MCF 10A (cell line): ENCODE measurements at regions of chr12 and their contacts with region 1.

Region 1: GRCh38 chr12:64801381-64801780 is 23.1 kb upstream of the TBC1D30 start:
- DNase-seq: peak; percentile 45
- H3K4me3 Mint-ChIP-seq: no peak overlapping the region
- H3K27ac Mint-ChIP-seq: no peak overlapping the region
- H3K4me1 Mint-ChIP-seq: peaks cover 13% of the 10 kb centered on the region
- H3K27me3 Mint-ChIP-seq: no peaks in the 10 kb centered on the region
- CTCF ChIP-seq: no peak

Region 2: GRCh38 chr12:64431791-64432190 is 369.6 kb before region 1 on chr12:
- CTCF ChIA-PET with region 1: no interaction called
- POLR2A ChIA-PET with region 1: no interaction called
- intact Hi-C with region 1: no loop called
- DNase-seq: no peak
- H3K4me3 Mint-ChIP-seq: no peak overlapping the region
- H3K27ac Mint-ChIP-seq: no peak overlapping the region
- H3K4me1 Mint-ChIP-seq: no peaks in the 10 kb centered on the region
- H3K27me3 Mint-ChIP-seq: no peaks in the 10 kb centered on the region
- CTCF ChIP-seq: no peak

Region 3: GRCh38 chr12:64780531-64781279 is 20.7 kb before region 1 on chr12:
- CTCF ChIA-PET with region 1: interaction called, 27 read pairs
- POLR2A ChIA-PET with region 1: interaction called, 4 read pairs
- intact Hi-C with region 1: no loop called
- DNase-seq: peak; percentile 57
- H3K4me3 Mint-ChIP-seq: peak overlapping the region; percentile 80
- H3K27ac Mint-ChIP-seq: peak overlapping the region; percentile 23
- H3K4me1 Mint-ChIP-seq: peaks cover 7% of the 10 kb centered on the region
- H3K27me3 Mint-ChIP-seq: peaks cover 17% of the 10 kb centered on the region
- CTCF ChIP-seq: no peak

Region 4: DNA sequence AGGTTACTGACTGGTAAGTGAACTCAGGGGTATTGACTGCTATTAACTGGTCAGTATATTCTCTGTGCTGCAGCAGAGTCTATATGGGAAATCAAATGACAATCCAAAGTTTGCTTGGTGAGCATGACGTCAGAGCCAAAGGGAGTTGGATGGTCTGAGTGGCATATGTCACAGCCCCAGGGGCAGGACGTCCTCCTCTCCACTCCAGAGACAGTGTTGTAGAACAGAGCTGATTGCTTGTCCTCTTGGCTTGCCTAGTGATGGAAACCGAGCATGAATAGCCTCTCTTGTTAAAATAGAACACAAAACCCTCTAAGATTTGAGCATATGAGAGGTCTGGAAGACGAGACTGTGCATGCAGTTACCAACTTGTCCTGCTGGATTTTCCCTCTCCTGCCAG is 19.8 kb after region 1 on chr12:
- CTCF ChIA-PET with region 1: interaction called, 37 read pairs
- POLR2A ChIA-PET with region 1: no interaction called
- intact Hi-C with region 1: no loop called
- DNase-seq: no peak
- H3K4me3 Mint-ChIP-seq: no peak overlapping the region
- H3K27ac Mint-ChIP-seq: no peak overlapping the region
- H3K4me1 Mint-ChIP-seq: peaks cover 14% of the 10 kb centered on the region
- H3K27me3 Mint-ChIP-seq: no peaks in the 10 kb centered on the region
- CTCF ChIP-seq: no peak

Region 5: DNA sequence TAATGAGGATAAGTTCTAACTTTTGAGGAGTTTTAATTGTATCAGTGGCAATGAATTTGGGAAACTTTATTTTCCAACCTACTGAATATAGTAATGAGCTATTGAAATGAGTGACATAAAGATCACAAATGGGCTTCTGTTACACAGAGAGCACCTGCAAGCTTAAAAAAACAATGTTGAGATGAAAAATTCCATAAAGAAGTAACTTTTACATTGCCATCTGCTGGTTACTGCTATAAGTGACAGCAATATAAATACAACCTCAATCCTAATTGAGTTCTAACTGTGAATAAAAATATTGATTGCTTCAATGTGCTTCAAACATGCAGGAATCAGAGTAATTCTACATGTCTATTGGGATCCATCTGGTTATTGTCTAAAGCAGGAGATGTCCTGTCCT is 305.6 kb after region 1 on chr12:
- CTCF ChIA-PET with region 1: interaction called, 43 read pairs
- POLR2A ChIA-PET with region 1: interaction called, 3 read pairs
- intact Hi-C with region 1: loop called (anchors 1 kb)
- DNase-seq: peak; percentile 9
- H3K4me3 Mint-ChIP-seq: no peak overlapping the region
- H3K27ac Mint-ChIP-seq: no peak overlapping the region
- H3K4me1 Mint-ChIP-seq: no peaks in the 10 kb centered on the region
- H3K27me3 Mint-ChIP-seq: peaks cover 20% of the 10 kb centered on the region
- CTCF ChIP-seq: no peak

Region 6: DNA sequence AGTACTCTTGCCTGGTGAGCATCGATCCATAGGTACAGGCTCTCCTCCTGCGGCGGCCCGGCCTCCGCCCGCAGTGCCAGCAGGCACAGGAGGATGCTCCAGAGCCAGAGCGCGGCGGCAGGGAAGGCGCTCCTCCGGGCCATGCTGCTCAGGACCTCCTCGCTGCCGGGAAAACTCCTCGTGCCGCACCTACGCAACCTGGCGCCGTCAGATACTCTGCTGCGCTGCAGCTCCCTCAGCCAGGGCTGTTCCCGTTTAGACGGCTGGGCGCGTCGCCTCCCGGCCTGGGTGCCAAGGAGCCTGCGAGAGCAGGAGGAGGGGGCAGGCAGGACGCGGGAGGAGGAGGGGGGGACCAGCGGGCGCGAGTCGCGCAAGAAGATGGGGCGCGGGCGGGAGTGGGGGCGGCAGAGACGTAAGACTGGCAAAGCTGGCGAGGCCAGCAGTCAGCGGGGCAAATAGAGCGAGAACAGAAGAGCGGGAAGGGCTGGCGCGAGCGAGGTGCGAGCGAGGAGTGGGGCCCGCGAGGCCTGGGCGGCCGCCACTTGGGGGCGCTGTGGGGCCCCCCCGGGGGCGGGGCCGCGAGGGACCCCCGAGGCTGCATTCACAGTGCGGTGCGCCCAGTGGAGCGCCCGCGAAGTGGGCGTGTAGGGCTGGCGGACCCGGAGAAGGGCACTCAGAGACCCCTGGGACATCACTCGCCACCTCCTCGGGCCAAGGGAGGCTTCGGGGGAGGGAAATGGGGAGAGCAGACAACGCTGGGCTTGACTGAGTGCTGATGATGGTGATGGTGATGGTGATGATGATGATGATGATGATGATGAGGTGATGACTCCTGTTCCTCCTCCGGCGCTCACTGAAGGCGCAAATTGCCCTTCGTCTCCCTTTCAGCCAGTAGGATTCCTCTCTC is 319.9 kb after region 1 on chr12 and contains the start of gene WIF1:
- CTCF ChIA-PET with region 1: interaction called, 13 read pairs
- POLR2A ChIA-PET with region 1: no interaction called
- intact Hi-C with region 1: loop called (anchors 1 kb)
- DNase-seq: no peak
- H3K4me3 Mint-ChIP-seq: no peak within 1 kb of the TSS
- H3K27ac Mint-ChIP-seq: no peak within 1 kb of the TSS
- H3K4me1 Mint-ChIP-seq: no peaks in the 10 kb centered on the region
- H3K27me3 Mint-ChIP-seq: peaks cover 68% of the 10 kb centered on the region
- CTCF ChIP-seq: peak; percentile 43
- total RNA-seq, gene WIF1: not detected in 2 replicates

Region 7: GRCh38 chr12:65232476-65233077 is 431.2 kb after region 1 on chr12:
- CTCF ChIA-PET with region 1: interaction called, 8 read pairs
- POLR2A ChIA-PET with region 1: no interaction called
- intact Hi-C with region 1: loop called (anchors 10 kb)
- DNase-seq: peak; percentile 28
- H3K4me3 Mint-ChIP-seq: no peak overlapping the region
- H3K27ac Mint-ChIP-seq: peak overlapping the region; percentile 29
- H3K4me1 Mint-ChIP-seq: peaks cover 17% of the 10 kb centered on the region
- H3K27me3 Mint-ChIP-seq: no peaks in the 10 kb centered on the region
- CTCF ChIP-seq: peak; percentile 29